ENCODE measurements at regions of chr20 and their contacts with region 1.

Region 1: GRCh38 chr20:62065669-62066338 is at the start of gene TAF4:
- DNase-seq: peak; percentile 84
- H3K4me3 Mint-ChIP-seq: peak within 1 kb of the TSS; percentile 80
- H3K27ac Mint-ChIP-seq: peak within 1 kb of the TSS; percentile 80
- H3K4me1 Mint-ChIP-seq: peaks cover 38% of the 10 kb centered on the region
- H3K27me3 Mint-ChIP-seq: no peaks in the 10 kb centered on the region
- total RNA-seq, gene TAF4: 18.0 to 20.0 TPM

Region 2: GRCh38 chr20:62087311-62088236 is 21.8 kb after region 1 on chr20:
- CTCF ChIA-PET with region 1: no interaction called
- POLR2A ChIA-PET with region 1: no interaction called
- DNase-seq: no peak
- H3K4me3 Mint-ChIP-seq: no peak overlapping the region
- H3K27ac Mint-ChIP-seq: no peak overlapping the region
- H3K4me1 Mint-ChIP-seq: no peaks in the 10 kb centered on the region
- H3K27me3 Mint-ChIP-seq: no peaks in the 10 kb centered on the region

Region 3: DNA sequence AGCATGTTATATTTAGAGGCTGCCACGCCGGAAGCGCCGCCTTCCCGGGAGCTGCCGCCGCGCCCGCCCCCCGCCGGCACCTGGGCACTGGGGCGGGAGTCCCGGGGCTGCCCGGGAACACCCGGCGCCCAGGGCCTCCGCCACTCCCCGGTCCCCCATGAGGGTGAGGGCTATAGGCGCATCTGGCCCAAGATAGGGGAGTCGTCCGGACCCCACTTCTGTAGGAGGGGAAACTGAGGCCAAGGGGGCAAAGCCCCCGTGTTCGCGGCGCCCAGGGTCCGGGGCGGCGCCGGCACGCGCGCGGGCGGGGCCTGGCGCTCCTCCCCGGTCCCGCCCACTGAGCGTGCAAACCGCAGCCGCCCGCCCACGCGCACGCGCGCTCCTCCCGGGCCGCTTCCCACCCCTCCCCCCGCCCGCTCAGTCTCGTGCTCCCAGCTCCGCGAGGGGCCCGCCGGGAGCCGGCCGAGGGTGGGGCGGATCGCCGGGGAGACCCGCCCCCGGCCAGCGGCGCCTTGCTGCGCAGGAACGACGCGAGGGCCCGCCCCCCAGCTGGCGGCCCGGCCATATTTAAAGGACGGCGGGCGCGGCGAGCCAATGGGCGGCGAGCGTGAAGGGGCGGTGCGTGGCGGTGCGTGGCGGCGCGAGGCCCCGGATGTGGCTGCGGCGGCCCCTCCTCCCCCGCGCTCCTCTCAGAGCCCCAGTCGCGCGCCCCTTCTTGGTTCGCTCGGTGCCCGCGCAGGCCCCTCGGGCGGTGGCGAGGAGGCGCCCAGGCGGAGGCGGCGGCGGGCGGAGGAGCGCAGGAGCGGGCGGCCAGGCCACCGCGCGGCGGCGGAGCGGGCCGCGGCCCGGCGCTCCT is 56.2 kb after region 1 on chr20 and contains the start of gene LSM14B:
- CTCF ChIA-PET with region 1: no interaction called
- POLR2A ChIA-PET with region 1: interaction called, 41 read pairs
- DNase-seq: peak; percentile 97
- H3K4me3 Mint-ChIP-seq: peak within 1 kb of the TSS; percentile 84
- H3K27ac Mint-ChIP-seq: peak within 1 kb of the TSS; percentile 86
- H3K4me1 Mint-ChIP-seq: peaks cover 42% of the 10 kb centered on the region
- H3K27me3 Mint-ChIP-seq: no peaks in the 10 kb centered on the region
- total RNA-seq, gene LSM14B: 38.9 to 39.0 TPM

Region 4: GRCh38 chr20:62136283-62137091 is 70.7 kb after region 1 on chr20:
- CTCF ChIA-PET with region 1: interaction called, 3 read pairs
- POLR2A ChIA-PET with region 1: interaction called, 33 read pairs
- DNase-seq: peak; percentile 76
- H3K4me3 Mint-ChIP-seq: no peak overlapping the region
- H3K27ac Mint-ChIP-seq: peak overlapping the region; percentile 49
- H3K4me1 Mint-ChIP-seq: peaks cover 51% of the 10 kb centered on the region
- H3K27me3 Mint-ChIP-seq: no peaks in the 10 kb centered on the region

Region 5: DNA sequence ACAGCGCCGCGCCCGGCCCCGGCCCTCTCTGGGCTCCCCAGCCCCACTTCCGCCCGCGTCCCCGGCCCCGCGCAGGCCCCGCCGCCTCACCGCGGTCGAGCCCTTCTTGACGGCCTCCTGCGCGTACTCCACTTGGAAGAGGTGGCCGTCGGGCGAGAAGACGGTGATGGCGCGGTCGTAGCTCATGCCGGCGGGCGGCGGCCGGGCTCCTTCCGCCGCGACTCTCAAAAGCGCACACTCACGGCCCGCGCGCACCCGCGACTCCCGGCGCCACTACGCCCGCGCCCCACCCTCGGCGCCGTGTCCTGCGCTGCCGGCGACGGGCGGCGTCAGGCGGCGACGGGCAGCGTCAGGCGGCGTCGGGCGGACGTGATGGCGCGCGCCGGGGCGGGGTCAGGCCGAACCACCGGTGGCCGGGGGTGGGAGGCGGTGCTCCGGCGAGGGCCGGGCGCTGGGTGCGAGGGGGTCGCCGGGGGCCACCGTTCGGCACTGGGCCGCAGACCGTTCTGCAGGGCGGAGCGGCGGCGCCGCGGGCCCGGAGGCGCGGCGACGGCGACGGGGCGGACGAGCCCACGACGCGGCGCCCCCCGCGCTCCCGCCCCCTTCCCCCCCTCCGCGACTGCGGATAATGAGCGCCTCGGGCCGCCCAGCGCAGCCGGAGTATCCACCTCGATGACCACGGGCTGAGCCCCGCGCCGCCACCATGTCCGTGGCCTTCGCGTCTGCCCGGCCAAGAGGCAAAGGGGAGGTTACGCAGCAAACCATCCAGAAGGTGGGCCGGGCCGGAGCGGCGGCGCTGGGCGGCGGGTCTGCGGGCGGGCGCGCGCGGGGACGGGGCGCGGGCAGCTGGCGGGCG is 77.5 kb after region 1 on chr20 and contains the starts of genes PSMA7 and SS18L1:
- CTCF ChIA-PET with region 1: no interaction called
- POLR2A ChIA-PET with region 1: interaction called, 33 read pairs
- DNase-seq: peak; percentile 87
- H3K4me3 Mint-ChIP-seq: peak within 1 kb of the TSS; percentile 89
- H3K27ac Mint-ChIP-seq: peak within 1 kb of the TSS; percentile 90
- H3K4me1 Mint-ChIP-seq: peaks cover 50% of the 10 kb centered on the region
- H3K27me3 Mint-ChIP-seq: no peaks in the 10 kb centered on the region
- total RNA-seq, gene PSMA7: 243 to 246 TPM
- total RNA-seq, gene SS18L1: 15.1 to 16.7 TPM

Region 6: DNA sequence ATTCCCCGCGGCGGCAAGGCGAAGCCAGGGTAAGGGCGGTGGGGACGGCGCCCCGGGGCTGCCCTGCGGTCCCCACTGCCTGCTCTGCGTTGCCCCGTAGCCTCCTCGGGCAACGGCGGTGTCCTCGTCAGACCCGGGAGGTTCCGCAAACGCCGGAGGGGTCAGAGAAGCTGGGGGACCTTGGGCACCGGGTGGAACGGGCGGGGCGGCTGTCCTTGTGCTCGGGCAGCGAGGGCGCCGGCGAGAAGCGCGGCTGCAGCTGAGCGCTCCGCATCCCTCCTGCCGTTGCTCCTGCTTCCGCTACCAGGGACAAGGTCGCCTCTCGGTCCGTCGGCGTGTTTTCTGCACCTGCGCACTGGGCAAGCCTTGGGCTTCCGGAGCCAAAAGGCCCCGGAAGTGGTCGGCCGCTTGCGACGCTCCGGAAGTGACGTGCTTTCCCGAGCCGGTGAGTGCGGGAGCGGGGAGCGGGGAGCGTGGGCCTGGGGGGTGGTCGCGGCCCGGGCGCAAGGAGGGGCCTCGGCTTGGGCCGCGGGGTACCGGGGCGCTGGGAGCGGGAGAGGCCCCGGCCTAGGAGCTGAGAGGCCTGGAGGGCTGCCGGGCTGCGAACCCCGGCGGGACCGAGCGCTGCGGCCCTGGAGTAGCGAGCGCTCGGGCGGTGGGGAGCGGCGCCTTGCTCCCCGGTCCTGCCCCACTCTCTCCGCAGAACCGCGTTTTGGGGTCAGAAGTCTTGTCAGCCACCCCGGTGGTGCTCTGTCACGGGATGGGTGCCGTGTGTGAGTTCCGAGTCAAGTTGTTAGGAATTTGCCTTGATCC is 117.0 kb after region 1 on chr20 and contains the start of gene MTG2:
- CTCF ChIA-PET with region 1: no interaction called
- POLR2A ChIA-PET with region 1: interaction called, 12 read pairs
- DNase-seq: peak; percentile 95
- H3K4me3 Mint-ChIP-seq: peak within 1 kb of the TSS; percentile 92
- H3K27ac Mint-ChIP-seq: peak within 1 kb of the TSS; percentile 88
- H3K4me1 Mint-ChIP-seq: peaks cover 39% of the 10 kb centered on the region
- H3K27me3 Mint-ChIP-seq: no peaks in the 10 kb centered on the region
- total RNA-seq, gene MTG2: 25.6 to 27.2 TPM

Measured in activated CD4-positive, alpha-beta memory T cell treated with anti-CD3 and anti-CD28 coated beads, Interleukin-2, amount 10 ng/mL, durations not matched to agents 7 days and 5 days (primary cell).